HEK293T (cell line): ENCODE measurements at regions of chr1 and their contacts with region 1.

Region 1: GRCh38 chr1:160291248-160292220 is 6.6 kb upstream of the PEX19 start:
- DNase-seq: peak; percentile 80

Region 2: GRCh38 chr1:160062230-160062532 is 229.4 kb before region 1 on chr1:
- CTCF ChIA-PET with region 1: no interaction called
- POLR2A ChIA-PET with region 1: no interaction called
- DNase-seq: no peak

Region 3: DNA sequence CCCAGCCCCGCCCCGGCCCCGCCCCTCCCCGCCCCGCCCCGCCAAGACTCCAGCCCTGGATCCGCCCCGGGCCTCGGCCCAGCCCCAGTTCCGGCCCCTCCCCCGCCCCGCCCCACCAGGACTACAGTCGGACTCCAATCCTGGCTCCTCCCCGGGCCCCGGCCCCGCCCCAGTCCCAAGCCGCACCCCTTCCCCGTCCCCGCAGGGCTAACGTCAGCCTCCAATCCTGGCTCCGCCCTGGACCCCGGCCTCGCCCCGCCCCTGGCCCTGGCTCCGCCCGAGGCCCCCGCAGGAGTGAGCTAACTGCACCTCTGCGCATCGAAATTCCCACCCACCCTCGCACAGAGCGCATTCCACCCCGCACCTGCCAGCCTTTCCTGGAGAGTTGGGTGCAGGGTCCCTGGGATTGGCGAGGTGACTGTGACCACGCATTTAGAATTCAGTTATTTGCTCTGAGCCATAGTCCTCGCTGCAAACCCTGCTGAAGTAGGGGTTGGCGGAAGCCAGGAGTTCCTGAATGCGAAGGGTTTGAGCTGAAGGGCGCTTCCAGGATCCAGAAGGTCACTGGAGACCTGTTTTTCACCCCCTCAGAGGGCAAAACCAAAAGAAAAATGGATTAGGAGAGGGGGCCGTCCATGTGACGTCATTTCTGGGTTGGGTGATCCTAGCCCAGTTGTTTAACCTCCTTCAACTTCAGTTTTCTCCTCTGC is 192.5 kb before region 1 on chr1:
- CTCF ChIA-PET with region 1: interaction called, 21 read pairs
- POLR2A ChIA-PET with region 1: no interaction called
- DNase-seq: peak; percentile 100

Region 4: GRCh38 chr1:160193091-160193819 is 98.3 kb before region 1 on chr1:
- CTCF ChIA-PET with region 1: interaction called, 29 read pairs
- POLR2A ChIA-PET with region 1: no interaction called
- DNase-seq: peak; percentile 92

Region 5: GRCh38 chr1:160261893-160262794 is 29.4 kb before region 1 on chr1 and contains the start of gene DCAF8:
- CTCF ChIA-PET with region 1: interaction called, 9 read pairs
- POLR2A ChIA-PET with region 1: interaction called, 11 read pairs
- DNase-seq: peak; percentile 98

Region 6: GRCh38 chr1:160307118-160307854 is 15.8 kb after region 1 on chr1:
- CTCF ChIA-PET with region 1: interaction called, 17 read pairs
- POLR2A ChIA-PET with region 1: no interaction called
- DNase-seq: no peak

Region 7: GRCh38 chr1:160376525-160377131 is 85.1 kb after region 1 on chr1:
- CTCF ChIA-PET with region 1: interaction called, 24 read pairs
- POLR2A ChIA-PET with region 1: no interaction called
- DNase-seq: peak; percentile 78